Vagina (tissue), 2 donors: ENCODE measurements at regions of chr16 and their contacts with region 1.

Region 1: GRCh38 chr16:31873556-31874365 is at the start of gene ZNF267:
- DNase-seq: peak in 1 of 2 donors; percentile 89
- H3K4me3 ChIP-seq: peak within 1 kb of the TSS; percentile 94 to 99
- H3K27ac ChIP-seq: peak within 1 kb of the TSS; percentile 87
- H3K4me1 ChIP-seq: peaks cover 49% of the 10 kb centered on the region
- H3K27me3 ChIP-seq: no peaks in the 10 kb centered on the region
- CTCF ChIP-seq: no peak
- POLR2A ChIP-seq: peak in 1 of 2 donors; percentile 82
- total RNA-seq, gene ZNF267: 14.2 TPM

Region 2: GRCh38 chr16:30370444-30371247 is 1503.1 kb before region 1 on chr16 and contains the start of gene TBC1D10B:
- intact Hi-C with region 1: loop called (anchors 10 kb)
- DNase-seq: peak; percentile 100
- H3K4me3 ChIP-seq: peak within 1 kb of the TSS; percentile 92 to 93
- H3K27ac ChIP-seq: peak within 1 kb of the TSS; percentile 91
- H3K4me1 ChIP-seq: peaks cover 45% of the 10 kb centered on the region
- H3K27me3 ChIP-seq: no peaks in the 10 kb centered on the region
- CTCF ChIP-seq: no peak
- POLR2A ChIP-seq: peak in 1 of 2 donors; percentile 69
- total RNA-seq, gene TBC1D10B: 42.2 TPM

Region 3: GRCh38 chr16:30892680-30893416 is 980.9 kb before region 1 on chr16:
- intact Hi-C with region 1: no loop called
- DNase-seq: no peak
- H3K4me3 ChIP-seq: peak overlapping the region; percentile 87 to 94
- H3K27ac ChIP-seq: peak overlapping the region; percentile 100
- H3K4me1 ChIP-seq: peaks cover 48% of the 10 kb centered on the region
- H3K27me3 ChIP-seq: no peaks in the 10 kb centered on the region
- CTCF ChIP-seq: no peak
- POLR2A ChIP-seq: no peak

Region 4: GRCh38 chr16:31458844-31459721 is 414.7 kb before region 1 on chr16 and contains the start of gene ARMC5:
- intact Hi-C with region 1: loop called (anchors 10 kb)
- DNase-seq: peak in 1 of 2 donors; percentile 99
- H3K4me3 ChIP-seq: peak within 1 kb of the TSS; percentile 68 to 87
- H3K27ac ChIP-seq: peak within 1 kb of the TSS; percentile 94
- H3K4me1 ChIP-seq: peaks cover 55% of the 10 kb centered on the region
- H3K27me3 ChIP-seq: no peaks in the 10 kb centered on the region
- CTCF ChIP-seq: peak in 2 of 3 experiments; percentile 42 to 85
- POLR2A ChIP-seq: peak in 1 of 2 donors; percentile 57
- total RNA-seq, gene ARMC5: 11.3 TPM

Region 5: GRCh38 chr16:31819386-31819785 is 54.4 kb before region 1 on chr16:
- intact Hi-C with region 1: no loop called
- DNase-seq: no peak
- H3K4me3 ChIP-seq: no peak overlapping the region
- H3K27ac ChIP-seq: no peak overlapping the region
- H3K4me1 ChIP-seq: no peaks in the 10 kb centered on the region
- H3K27me3 ChIP-seq: no peaks in the 10 kb centered on the region
- CTCF ChIP-seq: no peak
- POLR2A ChIP-seq: no peak